Activated CD4-positive, alpha-beta memory T cell treated with anti-CD3 and anti-CD28 coated beads, Interleukin-2, amount 10 ng/mL, durations not matched to agents 7 days and 5 days (primary cell): ENCODE measurements at regions of chr5 and their contacts with region 1.

Region 1: DNA sequence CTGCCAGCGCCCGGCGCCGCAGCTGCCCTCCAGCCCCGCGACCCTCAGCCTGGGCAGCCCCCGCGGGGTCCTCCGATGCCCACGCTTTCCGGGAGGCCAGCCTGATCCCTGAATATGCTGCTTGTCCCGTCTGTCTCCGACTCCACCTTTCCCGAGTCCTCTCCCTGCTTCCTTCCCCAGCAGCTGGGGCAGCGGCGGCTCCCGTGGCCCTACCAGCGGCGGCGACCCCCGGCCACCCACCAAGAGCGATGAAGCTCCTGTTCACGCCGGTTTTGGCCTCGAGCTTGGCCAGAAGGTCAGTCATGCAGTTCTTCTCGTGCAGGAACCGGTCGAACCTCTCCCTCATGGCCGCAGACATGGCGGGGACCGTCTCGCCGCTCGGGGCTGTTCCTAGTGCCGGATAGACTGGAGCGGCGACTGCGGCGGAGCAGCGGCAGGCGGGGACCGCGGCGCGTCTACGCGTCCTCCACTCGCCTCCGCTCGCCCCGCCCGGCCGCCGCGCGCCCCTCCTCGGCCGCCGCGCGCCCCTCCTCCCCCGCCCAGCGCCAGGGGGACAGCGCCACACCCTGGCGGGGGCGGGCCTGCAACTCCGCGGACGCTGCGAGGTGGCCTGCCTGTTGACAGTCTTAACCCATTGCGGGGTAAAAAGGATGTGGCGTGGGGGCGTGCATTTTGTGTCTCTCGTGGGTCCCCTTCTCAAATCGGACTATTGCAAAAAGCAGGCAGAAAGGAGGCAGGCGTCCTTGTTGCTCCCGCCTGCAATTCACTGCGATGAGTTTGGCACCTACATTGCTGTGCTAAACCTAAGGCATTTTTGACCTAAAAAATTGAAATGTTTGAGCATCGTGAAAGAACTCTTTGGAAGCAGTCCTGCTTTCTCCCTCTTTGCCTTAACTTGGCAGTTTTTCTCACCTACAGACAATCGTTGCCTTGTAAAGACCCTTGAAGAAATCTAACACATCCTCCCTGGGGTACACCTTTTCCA is at the start of gene REEP5:
- DNase-seq: peak; percentile 90
- H3K4me3 Mint-ChIP-seq: peak within 1 kb of the TSS; percentile 92
- H3K27ac Mint-ChIP-seq: peak within 1 kb of the TSS; percentile 99
- H3K4me1 Mint-ChIP-seq: peaks cover 66% of the 10 kb centered on the region
- H3K27me3 Mint-ChIP-seq: no peaks in the 10 kb centered on the region
- total RNA-seq, gene REEP5: 95.0 to 96.3 TPM

Region 2: DNA sequence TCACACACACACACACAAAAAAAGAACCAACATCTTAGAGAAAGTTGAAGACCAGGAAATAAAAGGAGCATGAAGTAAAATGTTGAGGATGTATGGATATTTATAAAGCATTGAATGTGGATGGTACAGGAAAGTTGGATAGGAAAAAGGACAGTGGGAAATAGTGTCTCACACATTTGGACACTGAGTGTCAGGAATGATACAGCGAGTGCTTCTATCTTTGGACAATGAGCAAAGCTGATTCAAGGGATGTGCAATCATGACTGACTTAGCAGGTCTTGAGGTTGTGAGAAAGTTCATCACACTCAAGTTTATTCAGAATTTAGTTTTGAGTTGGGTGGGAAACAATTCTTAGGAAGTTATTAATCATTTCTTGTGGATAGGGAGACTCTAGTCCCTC is 111.1 kb before region 1 on chr5:
- CTCF ChIA-PET with region 1: no interaction called
- POLR2A ChIA-PET with region 1: no interaction called
- DNase-seq: no peak
- H3K4me3 Mint-ChIP-seq: no peak overlapping the region
- H3K27ac Mint-ChIP-seq: no peak overlapping the region
- H3K4me1 Mint-ChIP-seq: no peaks in the 10 kb centered on the region
- H3K27me3 Mint-ChIP-seq: no peaks in the 10 kb centered on the region

Region 3: GRCh38 chr5:112833971-112834370 is 88.2 kb before region 1 on chr5:
- CTCF ChIA-PET with region 1: no interaction called
- POLR2A ChIA-PET with region 1: no interaction called
- DNase-seq: no peak
- H3K4me3 Mint-ChIP-seq: no peak overlapping the region
- H3K27ac Mint-ChIP-seq: no peak overlapping the region
- H3K4me1 Mint-ChIP-seq: peaks cover 4% of the 10 kb centered on the region
- H3K27me3 Mint-ChIP-seq: no peaks in the 10 kb centered on the region

Region 4: DNA sequence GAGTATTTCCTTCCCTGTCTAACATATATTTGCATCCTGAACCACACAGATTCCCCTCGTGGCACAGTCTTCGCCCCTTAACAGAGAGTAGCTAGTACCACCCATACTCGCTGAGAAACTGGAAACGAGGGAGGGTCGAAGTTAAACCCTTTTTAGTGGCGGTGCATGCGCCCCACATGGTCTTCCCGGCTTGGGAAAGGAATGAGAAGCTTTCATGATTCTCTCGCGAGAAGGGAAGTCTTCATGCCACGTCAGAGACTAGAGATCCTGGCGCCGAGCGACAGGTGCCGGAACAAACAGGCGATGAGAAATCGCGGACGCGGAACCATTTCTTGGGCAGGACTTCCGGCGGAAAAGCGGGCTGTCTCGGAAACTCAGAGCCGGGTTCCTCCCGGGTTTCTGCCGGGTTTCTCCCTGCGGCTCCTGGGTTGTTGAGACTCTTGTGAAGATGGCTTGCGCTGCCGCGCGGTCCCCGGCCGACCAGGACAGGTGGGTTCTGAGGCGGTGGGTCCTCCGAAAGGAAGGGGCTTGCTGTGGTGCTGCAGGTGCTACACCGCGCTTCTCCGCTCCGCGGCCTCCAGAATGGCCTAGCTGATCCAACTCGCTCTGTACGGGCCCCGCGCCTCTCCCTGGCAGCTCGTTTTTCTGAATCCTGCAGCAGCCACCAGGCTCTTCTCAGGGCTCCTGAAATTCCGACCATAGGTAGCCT is 61.0 kb before region 1 on chr5 and contains the start of gene SRP19:
- CTCF ChIA-PET with region 1: interaction called, 4 read pairs
- POLR2A ChIA-PET with region 1: interaction called, 26 read pairs
- DNase-seq: peak; percentile 93
- H3K4me3 Mint-ChIP-seq: peak within 1 kb of the TSS; percentile 95
- H3K27ac Mint-ChIP-seq: peak within 1 kb of the TSS; percentile 90
- H3K4me1 Mint-ChIP-seq: peaks cover 42% of the 10 kb centered on the region
- H3K27me3 Mint-ChIP-seq: peaks cover 3% of the 10 kb centered on the region
- total RNA-seq, gene SRP19: 54.6 to 68.3 TPM

Region 5: GRCh38 chr5:112878760-112879159 is 43.4 kb before region 1 on chr5:
- CTCF ChIA-PET with region 1: interaction called, 6 read pairs
- POLR2A ChIA-PET with region 1: interaction called, 19 read pairs
- DNase-seq: peak; percentile 77
- H3K4me3 Mint-ChIP-seq: peak overlapping the region; percentile 35
- H3K27ac Mint-ChIP-seq: peak overlapping the region; percentile 71
- H3K4me1 Mint-ChIP-seq: peaks cover 52% of the 10 kb centered on the region
- H3K27me3 Mint-ChIP-seq: no peaks in the 10 kb centered on the region

Region 6: GRCh38 chr5:112958093-112959088 is 36.3 kb after region 1 on chr5:
- CTCF ChIA-PET with region 1: interaction called, 26 read pairs
- POLR2A ChIA-PET with region 1: interaction called, 9 read pairs
- DNase-seq: no peak
- H3K4me3 Mint-ChIP-seq: no peak overlapping the region
- H3K27ac Mint-ChIP-seq: no peak overlapping the region
- H3K4me1 Mint-ChIP-seq: peaks cover 37% of the 10 kb centered on the region
- H3K27me3 Mint-ChIP-seq: no peaks in the 10 kb centered on the region

Region 7: DNA sequence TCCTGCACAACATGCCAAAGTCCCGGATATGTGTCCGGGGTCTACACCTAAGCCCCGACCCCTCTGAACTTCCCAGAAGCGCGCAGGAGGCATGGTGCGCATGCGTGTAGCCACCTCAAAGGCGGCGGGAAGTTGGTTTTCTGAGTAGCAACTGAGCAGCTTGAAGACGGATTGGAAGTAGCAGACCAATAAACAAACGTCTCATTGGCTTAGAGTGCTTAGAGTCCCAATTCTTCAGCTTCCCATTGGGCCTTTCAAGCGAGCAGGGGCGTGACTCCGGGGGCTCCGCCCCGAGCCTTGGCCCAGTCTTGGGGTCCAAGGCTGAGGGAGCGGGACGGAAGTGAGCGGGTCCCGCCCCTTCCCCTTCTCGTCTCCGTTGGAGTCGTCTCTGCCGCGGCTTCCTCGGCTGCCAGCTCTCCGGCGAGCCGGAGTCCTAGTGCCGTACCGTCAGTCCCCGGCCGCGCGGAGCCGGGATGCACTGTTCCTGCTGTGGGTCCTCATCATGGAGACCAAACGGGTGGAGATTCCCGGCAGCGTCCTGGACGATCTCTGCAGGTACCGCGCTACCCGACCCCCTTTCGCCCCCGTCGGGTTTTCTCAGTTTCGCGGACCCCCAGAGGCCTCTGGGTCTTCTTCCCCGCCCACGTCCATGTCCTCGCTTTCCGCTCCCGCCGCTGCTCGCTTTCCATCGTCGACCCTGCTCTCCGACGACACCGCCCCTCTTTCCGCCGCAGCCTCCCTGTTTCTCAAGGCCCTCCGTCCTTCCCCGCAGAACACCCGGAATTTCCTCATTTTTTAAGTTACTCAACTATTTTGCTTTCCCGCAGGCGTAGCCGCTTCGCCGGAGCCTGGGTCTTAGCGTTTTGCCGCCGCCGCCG is 54.5 kb after region 1 on chr5 and contains the start of gene DCP2:
- CTCF ChIA-PET with region 1: interaction called, 8 read pairs
- POLR2A ChIA-PET with region 1: interaction called, 94 read pairs
- DNase-seq: peak; percentile 97
- H3K4me3 Mint-ChIP-seq: peak within 1 kb of the TSS; percentile 99
- H3K27ac Mint-ChIP-seq: peak within 1 kb of the TSS; percentile 96
- H3K4me1 Mint-ChIP-seq: peaks cover 46% of the 10 kb centered on the region
- H3K27me3 Mint-ChIP-seq: no peaks in the 10 kb centered on the region
- total RNA-seq, gene DCP2: 135 to 138 TPM